Activated CD4-positive, alpha-beta memory T cell treated with anti-CD3 and anti-CD28 coated beads, Interleukin-2, amount 10 ng/mL, durations not matched to agents 7 days and 5 days (primary cell): ENCODE measurements at regions of chr19 and their contacts with region 1.

Region 1: DNA sequence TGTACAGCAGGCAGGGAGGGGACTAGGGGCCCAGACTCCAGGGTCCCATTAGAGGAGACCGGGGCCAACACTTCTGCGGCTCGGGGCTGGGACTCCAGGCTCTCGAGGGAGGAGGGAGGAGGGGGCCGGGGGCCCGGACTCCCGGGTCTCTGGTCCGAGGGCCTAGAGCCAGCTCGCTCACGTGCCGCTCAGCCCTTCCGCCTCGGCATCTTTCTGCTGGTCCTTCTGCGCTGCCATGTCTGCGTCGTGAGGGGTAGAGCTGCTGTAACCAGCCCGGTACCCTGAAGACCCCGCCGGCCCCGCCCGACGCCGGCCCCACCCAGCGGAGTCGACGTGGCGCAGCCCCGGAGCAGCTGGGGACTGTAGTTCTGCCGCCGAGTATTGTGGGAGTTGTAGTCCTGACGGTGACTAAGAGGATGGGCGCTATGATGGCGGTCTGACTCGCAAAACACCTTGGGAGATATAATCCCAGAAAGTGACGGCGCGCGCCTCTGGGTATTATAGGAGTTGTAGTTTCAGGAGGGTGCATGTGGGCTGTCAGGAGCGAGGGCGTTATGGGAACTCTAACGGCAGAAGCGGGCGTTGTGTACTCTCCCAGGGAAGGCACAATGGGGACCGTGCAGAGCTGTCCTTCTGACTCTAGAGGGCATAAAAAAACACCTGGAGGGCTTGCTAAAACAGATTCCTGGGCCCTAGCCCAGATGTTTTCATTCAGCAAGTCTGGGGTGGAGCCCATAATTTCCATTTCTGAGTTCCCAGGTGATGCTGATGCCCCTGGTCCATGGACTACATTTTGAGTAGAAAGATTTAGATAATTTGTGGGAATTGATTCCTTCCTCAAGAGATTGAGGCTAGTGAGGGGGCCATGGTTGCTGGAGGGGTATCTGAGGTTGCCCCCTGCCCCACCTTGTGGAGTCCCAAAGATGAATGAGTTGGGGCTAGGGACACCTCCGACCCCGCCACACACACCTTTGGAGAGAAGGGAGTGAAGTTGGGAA is at the start of gene RABAC1:
- DNase-seq: peak; percentile 92
- H3K4me3 Mint-ChIP-seq: peak within 1 kb of the TSS; percentile 92
- H3K27ac Mint-ChIP-seq: peak within 1 kb of the TSS; percentile 79
- H3K4me1 Mint-ChIP-seq: peaks cover 21% of the 10 kb centered on the region
- H3K27me3 Mint-ChIP-seq: no peaks in the 10 kb centered on the region
- total RNA-seq, gene RABAC1: 97.2 to 105 TPM

Region 2: DNA sequence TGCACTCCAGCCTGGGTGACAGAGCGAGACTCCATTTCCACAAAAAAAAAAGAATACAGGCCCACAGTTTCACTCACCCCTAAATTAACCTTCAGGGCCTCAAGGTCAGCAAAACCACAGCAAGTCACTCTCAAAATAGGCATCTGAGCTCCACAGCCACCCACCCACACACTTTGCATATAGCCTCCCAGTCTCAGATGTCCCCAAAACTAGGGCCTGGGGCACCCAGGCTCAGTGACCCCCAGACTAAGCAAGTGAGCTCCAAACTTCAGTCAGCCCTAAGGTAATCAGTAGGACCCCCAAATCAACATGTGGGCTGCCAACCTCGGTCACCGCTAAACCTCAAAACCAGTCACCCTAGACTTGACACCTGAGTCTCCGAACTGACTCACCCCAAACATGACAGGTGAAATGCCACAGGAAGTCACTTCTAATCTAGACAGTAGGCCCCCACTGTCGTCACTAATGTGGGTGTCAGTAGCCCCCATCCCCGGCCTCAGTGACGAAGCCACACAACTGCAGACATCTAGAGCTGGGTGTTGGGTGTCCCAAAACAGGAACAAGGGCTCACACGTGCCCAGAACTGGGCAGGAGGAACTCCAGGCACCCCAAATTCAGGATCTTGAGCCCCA is 14.1 kb before region 1 on chr19:
- CTCF ChIA-PET with region 1: interaction called, 10 read pairs
- POLR2A ChIA-PET with region 1: interaction called, 5 read pairs
- DNase-seq: peak; percentile 87
- H3K4me3 Mint-ChIP-seq: peak overlapping the region; percentile 4
- H3K27ac Mint-ChIP-seq: peak overlapping the region; percentile 79
- H3K4me1 Mint-ChIP-seq: peaks cover 44% of the 10 kb centered on the region
- H3K27me3 Mint-ChIP-seq: peaks cover 18% of the 10 kb centered on the region